Heart left ventricle (tissue), 16 donors: ENCODE measurements at regions of chr11 and their contacts with region 1.

Region 1: DNA sequence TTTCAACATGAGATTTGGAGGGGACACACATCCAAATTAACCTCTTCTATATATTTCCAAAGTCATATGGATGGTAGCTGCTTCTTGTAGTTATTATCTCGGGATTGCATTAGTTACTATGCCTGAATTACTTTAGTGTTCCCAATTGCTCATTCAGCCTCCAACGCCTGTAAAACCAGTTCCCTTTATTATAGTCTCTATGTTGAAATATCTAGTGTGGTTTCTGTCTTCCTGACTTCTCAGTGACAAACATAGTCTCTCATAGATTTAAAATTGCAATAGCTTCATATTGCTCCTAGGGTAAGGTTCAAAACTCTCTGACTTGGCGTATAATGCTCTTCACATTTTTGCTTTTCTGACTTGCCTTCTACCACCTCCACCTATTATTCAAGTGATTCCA is 366.4 kb downstream of the CASP12 start:
- DNase-seq: no peak
- ATAC-seq: no peak
- H3K4me3 ChIP-seq: no peak overlapping the region
- H3K27ac ChIP-seq: no peak overlapping the region
- H3K4me1 ChIP-seq: peaks cover 0 to 3% (median 0%) of the 10 kb centered on the region in 12 donors
- H3K27me3 ChIP-seq: no peaks in the 10 kb centered on the region
- CTCF ChIP-seq: no peak
- POLR2A ChIP-seq: no peak

Region 2: DNA sequence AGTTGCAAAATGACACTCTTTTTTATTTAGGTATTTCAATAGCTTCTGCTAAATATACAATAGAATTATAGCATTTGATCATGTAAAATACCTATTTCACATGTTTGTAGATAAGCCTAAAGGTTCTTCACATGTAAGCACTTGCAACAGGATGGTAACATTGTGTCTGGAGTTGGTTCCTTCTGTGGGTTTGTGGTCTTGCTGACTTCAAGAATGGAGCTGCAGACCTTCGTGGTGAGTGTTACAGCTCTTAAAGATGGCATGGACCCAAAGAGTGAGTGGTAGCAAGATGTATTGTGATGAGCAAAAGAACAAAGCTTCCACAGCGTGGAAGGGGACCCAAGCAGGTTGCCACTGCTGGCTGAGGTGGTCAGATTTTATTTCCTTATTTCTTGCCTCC is 121.6 kb before region 1 on chr11:
- intact Hi-C with region 1: no loop called
- DNase-seq: no peak
- ATAC-seq: no peak
- H3K4me3 ChIP-seq: peak overlapping the region in 2 of 12 donors; percentile 10 to 33
- H3K27ac ChIP-seq: peak overlapping the region in 1 of 12 donors; percentile 4
- H3K4me1 ChIP-seq: peaks cover 0 to 3% (median 0%) of the 10 kb centered on the region in 12 donors
- H3K27me3 ChIP-seq: no peaks in the 10 kb centered on the region
- CTCF ChIP-seq: no peak
- POLR2A ChIP-seq: no peak

Region 3: GRCh38 chr11:104547996-104548661 is 16.2 kb after region 1 on chr11:
- intact Hi-C with region 1: loop called in 1 of 10 experiments (anchors 1 kb)
- DNase-seq: no peak
- ATAC-seq: no peak
- H3K4me3 ChIP-seq: no peak overlapping the region
- H3K27ac ChIP-seq: no peak overlapping the region
- H3K4me1 ChIP-seq: no peaks in the 10 kb centered on the region
- H3K27me3 ChIP-seq: no peaks in the 10 kb centered on the region
- CTCF ChIP-seq: no peak
- POLR2A ChIP-seq: no peak